SK-N-SH (cell line): ENCODE measurements at regions of chr15 and their contacts with region 1.

Region 1: GRCh38 chr15:75201609-75202250 is at the start of gene C15orf39:
- DNase-seq: peak; percentile 96
- H3K4me3 ChIP-seq: peak within 1 kb of the TSS; percentile 74 to 83
- H3K27ac ChIP-seq: peak within 1 kb of the TSS; percentile 74 to 78
- H3K4me1 ChIP-seq: peaks cover 9 to 37% of the 10 kb centered on the region in 2 experiments; a peak in 1 of 4 replicates
- H3K27me3 ChIP-seq: no peaks in the 10 kb centered on the region
- CTCF ChIP-seq: peak; percentile 84
- EP300 ChIP-seq: no peak
- RAD21 ChIP-seq: peak; percentile 46; the same call in 1 of the 2 replicates
- polyA plus RNA-seq, gene C15orf39: 1.6 and 2.5 TPM in 2 replicates

Region 2: GRCh38 chr15:75023181-75023871 is 178.4 kb before region 1 on chr15 and contains the start of gene PPCDC:
- CTCF ChIA-PET with region 1: interaction called, 238 read pairs
- POLR2A ChIA-PET with region 1: interaction called, 8 read pairs
- DNase-seq: peak; percentile 97
- H3K4me3 ChIP-seq: peak within 1 kb of the TSS; percentile 94 to 97
- H3K27ac ChIP-seq: peak within 1 kb of the TSS; percentile 63 to 89
- H3K4me1 ChIP-seq: peaks cover 0 to 6% of the 10 kb centered on the region in 2 experiments; a peak in 1 of 4 replicates
- H3K27me3 ChIP-seq: no peaks in the 10 kb centered on the region
- CTCF ChIP-seq: no peak
- EP300 ChIP-seq: no peak
- RAD21 ChIP-seq: no peak
- polyA plus RNA-seq, gene PPCDC: 19.8 and 20.7 TPM in 2 replicates

Region 3: GRCh38 chr15:75029378-75030022 is 172.2 kb before region 1 on chr15:
- CTCF ChIA-PET with region 1: interaction called, 238 read pairs
- POLR2A ChIA-PET with region 1: interaction called, 3 read pairs
- DNase-seq: peak; percentile 87
- H3K4me3 ChIP-seq: no peak overlapping the region; a peak in 1 of 4 replicates
- H3K27ac ChIP-seq: no peak overlapping the region; a peak in 1 of 4 replicates
- H3K4me1 ChIP-seq: peaks cover 7 to 10% of the 10 kb centered on the region in 2 experiments; a peak in 3 of 4 replicates
- H3K27me3 ChIP-seq: no peaks in the 10 kb centered on the region
- CTCF ChIP-seq: peak; percentile 90
- EP300 ChIP-seq: no peak
- RAD21 ChIP-seq: peak; percentile 96

Region 4: DNA sequence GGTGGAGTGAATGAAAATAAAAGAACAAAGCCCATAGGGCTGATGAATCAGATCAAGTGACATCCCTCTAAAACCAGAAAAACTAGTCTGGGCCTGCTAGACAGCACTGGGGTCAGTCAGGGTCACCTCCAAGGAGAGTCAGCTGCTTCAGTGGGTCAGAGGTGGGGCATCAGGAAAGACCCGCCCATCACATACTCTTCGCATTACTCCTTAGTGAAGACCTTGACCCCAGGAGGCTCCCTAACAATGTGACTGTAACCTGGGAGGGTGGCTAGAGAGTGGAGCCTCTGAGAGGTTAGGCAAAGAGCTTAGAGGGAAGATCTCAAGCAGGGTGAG is 165.4 kb before region 1 on chr15:
- CTCF ChIA-PET with region 1: interaction called, 238 read pairs
- POLR2A ChIA-PET with region 1: interaction called, 3 read pairs
- DNase-seq: no peak
- H3K4me3 ChIP-seq: no peak overlapping the region
- H3K27ac ChIP-seq: no peak overlapping the region
- H3K4me1 ChIP-seq: no peaks in the 10 kb centered on the region; a peak in 2 of 4 replicates
- H3K27me3 ChIP-seq: no peaks in the 10 kb centered on the region
- CTCF ChIP-seq: no peak
- EP300 ChIP-seq: no peak
- RAD21 ChIP-seq: no peak

Region 5: GRCh38 chr15:75042730-75043508 is 158.8 kb before region 1 on chr15:
- CTCF ChIA-PET with region 1: interaction called, 21 read pairs
- POLR2A ChIA-PET with region 1: interaction called, 4 read pairs
- DNase-seq: peak; percentile 44
- H3K4me3 ChIP-seq: no peak overlapping the region
- H3K27ac ChIP-seq: peak overlapping the region; percentile 32 to 58; a peak in 2 of 4 replicates
- H3K4me1 ChIP-seq: peaks cover 19 to 34% of the 10 kb centered on the region in 2 experiments; a peak in 3 of 4 replicates
- H3K27me3 ChIP-seq: no peaks in the 10 kb centered on the region
- CTCF ChIP-seq: peak; percentile 43
- EP300 ChIP-seq: no peak
- RAD21 ChIP-seq: peak; percentile 50

Region 6: DNA sequence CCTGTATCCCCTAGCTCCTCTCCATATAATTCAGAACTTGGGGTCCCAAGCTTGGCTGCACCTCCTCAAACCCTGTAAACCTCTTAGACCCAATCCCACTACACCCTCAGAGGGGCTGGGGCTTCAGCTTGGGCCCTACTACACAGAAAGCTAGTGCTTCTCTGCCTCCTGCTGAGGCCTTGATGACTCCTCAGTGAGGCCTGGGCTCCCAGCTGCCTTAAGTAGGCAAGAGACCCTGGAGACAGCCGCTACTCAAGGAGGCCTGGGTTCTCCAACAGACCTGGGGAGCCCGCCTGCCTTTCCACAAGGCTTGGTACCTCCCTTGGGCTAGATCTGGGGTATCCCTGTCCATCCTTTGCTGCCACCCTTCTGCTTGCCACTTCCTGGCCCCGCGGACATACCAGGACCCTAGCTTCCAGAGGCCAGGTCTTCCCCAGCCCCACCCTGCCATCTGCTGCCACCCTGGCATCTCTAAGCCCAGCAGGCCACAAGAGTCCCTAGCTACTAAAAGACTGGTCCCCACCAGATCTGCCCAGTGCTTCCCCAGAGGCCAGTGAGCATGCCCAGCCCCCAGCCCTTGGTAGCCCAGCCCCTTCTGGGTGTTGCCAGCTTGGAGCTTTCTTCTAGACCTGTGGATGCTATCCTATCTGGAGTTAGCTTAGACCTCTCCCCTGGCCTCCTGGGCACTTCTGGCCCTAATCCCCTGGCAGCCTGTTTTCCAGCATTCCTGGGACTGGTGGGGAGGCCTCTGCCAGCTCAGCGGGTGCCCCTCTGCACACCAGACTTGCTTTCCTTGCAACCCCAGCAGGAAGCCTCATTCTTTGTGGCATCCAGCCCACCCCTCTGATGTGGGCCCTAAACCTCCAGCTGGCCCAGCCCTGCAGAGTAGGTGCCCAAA is 13.6 kb after region 1 on chr15:
- CTCF ChIA-PET with region 1: interaction called, 14 read pairs
- POLR2A ChIA-PET with region 1: no interaction called
- DNase-seq: no peak
- H3K4me3 ChIP-seq: no peak overlapping the region
- H3K27ac ChIP-seq: no peak overlapping the region
- H3K4me1 ChIP-seq: no peaks in the 10 kb centered on the region; a peak in 1 of 4 replicates
- H3K27me3 ChIP-seq: no peaks in the 10 kb centered on the region
- CTCF ChIP-seq: no peak
- EP300 ChIP-seq: no peak
- RAD21 ChIP-seq: no peak